ENCODE measurements at regions of chr9 and their contacts with region 1.

Region 1: DNA sequence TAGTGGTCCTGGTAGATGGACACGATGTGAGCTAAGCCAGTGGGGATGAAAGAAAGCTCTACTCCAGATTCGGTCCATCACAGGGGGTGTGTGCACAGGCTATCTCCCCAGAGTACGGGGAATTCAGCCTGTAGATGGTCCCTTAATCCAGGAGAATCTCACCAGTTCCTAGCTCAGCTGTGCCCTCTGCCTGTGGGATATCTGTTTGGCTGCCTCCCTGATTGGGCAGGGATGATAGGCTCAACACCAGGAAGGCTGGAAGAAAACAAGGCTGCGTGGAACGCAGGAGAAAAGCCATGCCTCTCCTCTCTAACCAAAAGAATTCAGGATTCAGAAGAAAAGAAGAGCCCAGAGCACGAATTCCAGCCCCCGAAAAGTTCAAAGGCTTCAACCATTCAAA is 40.9 kb downstream of the VLDLR start:
- DNase-seq: no peak
- ATAC-seq: peak in 2 of 4 donors; percentile 13 to 16
- H3K4me3 ChIP-seq: no peak overlapping the region
- H3K27ac ChIP-seq: peak overlapping the region in 10 of 12 donors; percentile 58 to 88 (median 74)
- H3K4me1 ChIP-seq: peaks cover 0 to 44% (median 24%) of the 10 kb centered on the region in 12 donors
- H3K27me3 ChIP-seq: no peaks in the 10 kb centered on the region
- CTCF ChIP-seq: peak in 2 of 12 donors; percentile 14 to 25
- POLR2A ChIP-seq: no peak

Region 2: GRCh38 chr9:2138646-2139045 is 523.9 kb before region 1 on chr9:
- intact Hi-C with region 1: no loop called
- DNase-seq: peak in 1 of 5 donors; percentile 41
- ATAC-seq: peak in 1 of 4 donors; percentile 25
- H3K4me3 ChIP-seq: no peak overlapping the region
- H3K27ac ChIP-seq: peak overlapping the region in 1 of 12 donors; percentile 2
- H3K4me1 ChIP-seq: peaks cover 0 to 42% (median 17%) of the 10 kb centered on the region in 12 donors
- H3K27me3 ChIP-seq: no peaks in the 10 kb centered on the region
- CTCF ChIP-seq: no peak
- POLR2A ChIP-seq: no peak

Region 3: DNA sequence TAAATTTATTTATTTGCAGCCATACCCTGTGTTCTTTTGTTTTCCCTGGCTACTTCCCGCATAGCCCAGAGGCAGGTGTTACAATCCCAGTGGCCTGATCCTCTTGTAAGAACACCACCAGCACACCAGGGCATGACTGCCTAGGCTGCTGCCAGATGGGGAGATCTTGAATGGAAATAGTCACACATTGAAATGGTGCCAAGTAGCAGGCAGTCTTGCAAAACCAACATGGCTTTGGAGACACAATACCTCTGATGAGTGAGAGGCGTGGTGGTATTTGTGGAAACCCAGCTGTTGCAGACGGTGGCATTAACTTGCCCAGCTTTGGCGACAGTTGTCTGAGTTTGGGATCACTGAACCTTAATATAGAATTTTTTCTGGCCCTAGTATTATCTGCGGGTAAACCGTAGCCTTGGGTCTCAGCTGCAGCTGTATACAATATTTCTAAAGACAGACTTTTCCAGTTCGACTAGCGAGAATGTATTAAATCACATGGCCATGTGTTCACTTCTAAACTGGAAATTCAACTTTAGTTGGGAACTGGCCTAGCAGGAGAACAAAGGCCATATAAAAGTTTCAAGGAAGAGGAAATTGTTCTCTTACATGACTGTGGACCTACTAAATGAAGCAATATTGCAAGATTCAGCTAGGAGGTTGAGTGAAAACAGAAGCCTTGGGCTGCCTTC is 370.4 kb before region 1 on chr9:
- intact Hi-C with region 1: no loop called
- DNase-seq: peak in 1 of 5 donors; percentile 37
- ATAC-seq: peak in 2 of 4 donors; percentile 42 to 60
- H3K4me3 ChIP-seq: no peak overlapping the region
- H3K27ac ChIP-seq: no peak overlapping the region
- H3K4me1 ChIP-seq: no peaks in the 10 kb centered on the region
- H3K27me3 ChIP-seq: no peaks in the 10 kb centered on the region
- CTCF ChIP-seq: no peak
- POLR2A ChIP-seq: no peak

Region 4: DNA sequence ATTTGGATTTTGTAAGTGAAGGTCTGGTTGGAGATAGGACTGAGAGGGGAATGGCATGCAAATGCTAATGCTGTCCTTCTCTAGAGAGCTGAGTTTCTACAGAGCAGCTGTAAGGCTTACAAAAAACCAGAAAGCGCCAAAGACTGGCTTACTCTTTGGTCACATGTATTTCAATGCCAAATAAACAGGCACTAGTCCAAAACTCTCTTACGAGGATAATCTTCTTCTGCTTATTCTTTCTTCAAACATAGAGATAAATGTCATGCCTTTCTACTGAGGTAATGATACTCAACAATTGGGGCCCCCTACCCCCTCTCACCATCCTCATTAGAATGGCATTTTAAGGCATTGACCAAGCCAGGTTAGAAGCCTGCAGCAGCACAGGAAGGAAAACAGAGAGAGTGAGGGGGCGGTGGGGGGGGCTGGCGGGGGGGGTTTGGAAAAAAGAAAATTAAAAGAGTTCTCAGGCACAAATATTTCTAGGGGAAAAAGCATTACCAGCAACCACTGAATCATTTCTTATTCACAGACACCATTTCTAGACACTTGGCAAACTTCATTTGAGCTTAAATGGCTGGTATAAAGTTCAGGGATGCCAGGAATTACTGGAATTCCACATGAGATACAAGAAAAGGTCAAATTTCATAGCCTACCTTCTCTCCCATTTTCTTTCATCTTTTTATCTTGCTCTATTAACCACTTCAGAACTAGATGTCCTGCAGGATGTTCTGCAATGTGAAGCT is 147.4 kb after region 1 on chr9:
- intact Hi-C with region 1: loop called in 1 of 10 experiments (anchors 10 kb)
- DNase-seq: peak in 1 of 5 donors; percentile 29
- ATAC-seq: peak; percentile 47 to 88 (median 84)
- H3K4me3 ChIP-seq: peak overlapping the region in 1 of 12 donors; percentile 14
- H3K27ac ChIP-seq: peak overlapping the region; percentile 40 to 82 (median 58)
- H3K4me1 ChIP-seq: peaks cover 0 to 30% (median 16%) of the 10 kb centered on the region in 12 donors
- H3K27me3 ChIP-seq: no peaks in the 10 kb centered on the region
- CTCF ChIP-seq: no peak
- POLR2A ChIP-seq: no peak

Measured in heart left ventricle (tissue), 16 donors.